Heart right ventricle (tissue), 16 donors: ENCODE measurements at regions of chrX and their contacts with region 1.

Region 1: GRCh38 chrX:77899081-77899828 is at the start of gene COX7B:
- DNase-seq: peak in 1 of 2 donors; percentile 85
- ATAC-seq: peak; percentile 76 to 86 (median 81)
- H3K4me3 ChIP-seq: peak within 1 kb of the TSS; percentile 48 to 80 (median 66)
- H3K27ac ChIP-seq: peak within 1 kb of the TSS; percentile 67 to 94 (median 90)
- H3K4me1 ChIP-seq: peaks cover 0 to 22% (median 8%) of the 10 kb centered on the region in 9 donors
- H3K27me3 ChIP-seq: no peaks in the 10 kb centered on the region
- CTCF ChIP-seq: peak in 7 of 9 donors; percentile 30 to 61 (median 44)
- total RNA-seq, gene COX7B: 915 to 1,917 (median 1,407) TPM

Region 2: GRCh38 chrX:77779695-77780094 is 119.6 kb before region 1 on chrX:
- intact Hi-C with region 1: loop called in 2 of 10 experiments (anchors 5 to 10 kb)
- DNase-seq: no peak
- ATAC-seq: no peak
- H3K4me3 ChIP-seq: no peak overlapping the region
- H3K27ac ChIP-seq: no peak overlapping the region
- H3K4me1 ChIP-seq: peaks cover 0 to 41% (median 9%) of the 10 kb centered on the region in 9 donors
- H3K27me3 ChIP-seq: no peaks in the 10 kb centered on the region
- CTCF ChIP-seq: no peak

Region 3: DNA sequence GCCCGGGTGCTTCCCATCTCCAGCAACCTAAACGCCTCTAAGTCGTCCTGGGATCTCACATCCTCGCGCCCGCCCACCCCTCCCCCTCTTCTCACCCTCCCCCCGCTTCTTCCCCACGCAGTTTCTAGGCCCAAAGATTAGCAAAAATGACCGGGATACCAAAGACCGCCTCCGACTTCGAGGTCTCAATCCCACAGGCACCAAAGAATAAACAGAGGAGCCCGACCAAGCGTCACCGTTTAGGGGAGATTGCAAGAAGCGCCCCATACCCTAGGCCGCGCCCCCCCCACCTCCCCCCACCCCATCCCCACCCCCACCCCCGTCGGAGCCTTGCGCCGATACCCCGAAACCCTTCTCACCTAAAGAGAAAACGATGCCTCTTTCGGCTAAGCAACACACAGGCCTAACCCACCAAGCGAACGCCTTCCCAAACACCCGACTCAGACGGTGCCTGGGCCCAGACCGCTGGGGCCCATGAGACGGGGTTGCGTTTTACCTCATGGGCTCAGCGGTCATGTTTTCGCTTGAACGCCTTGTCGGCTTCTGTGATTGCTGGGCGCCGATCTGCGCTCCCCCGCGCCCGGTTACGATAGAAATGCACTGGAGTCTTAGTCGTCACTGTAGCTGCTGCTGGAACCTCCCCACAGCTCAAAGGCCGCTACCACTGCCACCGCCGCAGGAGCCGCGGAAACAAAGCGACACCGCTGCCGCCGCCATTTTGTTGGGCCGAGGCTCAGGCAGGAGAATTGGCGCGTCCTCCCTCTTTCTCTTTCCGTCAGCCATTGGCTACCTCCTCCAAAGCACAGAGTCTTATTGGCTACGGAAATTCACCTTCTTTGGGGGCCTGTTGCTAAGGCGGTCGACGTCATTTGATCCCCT is 113.5 kb before region 1 on chrX and contains the start of gene ATRX:
- intact Hi-C with region 1: loop called in 3 of 10 experiments (anchors 5 to 10 kb)
- DNase-seq: peak; percentile 64 to 70
- ATAC-seq: peak; percentile 90 to 97 (median 95)
- H3K4me3 ChIP-seq: peak within 1 kb of the TSS; percentile 15 to 77 (median 68)
- H3K27ac ChIP-seq: peak within 1 kb of the TSS; percentile 52 to 94 (median 89)
- H3K4me1 ChIP-seq: peaks cover 0 to 31% (median 4%) of the 10 kb centered on the region in 9 donors
- H3K27me3 ChIP-seq: no peaks in the 10 kb centered on the region
- CTCF ChIP-seq: no peak
- total RNA-seq, gene ATRX: 71.2 to 107 (median 92.4) TPM

Region 4: DNA sequence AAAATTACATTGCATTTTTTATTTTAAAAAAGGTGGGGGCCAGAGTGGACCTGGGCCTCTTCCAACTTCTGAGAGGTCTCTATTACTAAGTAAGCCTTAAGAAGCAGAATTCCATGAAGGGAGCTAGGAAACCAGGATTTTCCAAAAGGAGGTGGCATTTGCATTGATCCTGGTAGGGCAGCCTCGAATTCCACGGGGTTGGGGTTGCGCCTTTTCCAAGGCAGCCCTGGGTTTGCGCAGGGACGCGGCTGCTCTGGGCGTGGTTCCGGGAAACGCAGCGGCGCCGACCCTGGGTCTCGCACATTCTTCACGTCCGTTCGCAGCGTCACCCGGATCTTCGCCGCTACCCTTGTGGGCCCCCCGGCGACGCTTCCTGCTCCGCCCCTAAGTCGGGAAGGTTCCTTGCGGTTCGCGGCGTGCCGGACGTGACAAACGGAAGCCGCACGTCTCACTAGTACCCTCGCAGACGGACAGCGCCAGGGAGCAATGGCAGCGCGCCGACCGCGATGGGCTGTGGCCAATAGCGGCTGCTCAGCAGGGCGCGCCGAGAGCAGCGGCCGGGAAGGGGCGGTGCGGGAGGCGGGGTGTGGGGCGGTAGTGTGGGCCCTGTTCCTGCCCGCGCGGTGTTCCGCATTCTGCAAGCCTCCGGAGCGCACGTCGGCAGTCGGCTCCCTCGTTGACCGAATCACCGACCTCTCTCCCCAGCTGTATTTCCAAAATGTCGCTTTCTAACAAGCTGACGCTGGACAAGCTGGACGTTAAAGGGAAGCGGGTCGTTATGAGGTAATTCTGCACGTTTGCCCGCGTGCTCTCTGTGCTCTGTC is 204.6 kb after region 1 on chrX and contains the start of gene PGK1:
- intact Hi-C with region 1: loop called in 3 of 10 experiments (anchors 10 kb)
- DNase-seq: peak; percentile 95 to 96
- ATAC-seq: peak; percentile 97 to 99 (median 98)
- H3K4me3 ChIP-seq: peak within 1 kb of the TSS; percentile 51 to 91 (median 82)
- H3K27ac ChIP-seq: peak within 1 kb of the TSS; percentile 75 to 97 (median 96)
- H3K4me1 ChIP-seq: peaks cover 0 to 38% (median 29%) of the 10 kb centered on the region in 9 donors
- H3K27me3 ChIP-seq: peaks cover 0 to 9% (median 0%) of the 10 kb centered on the region in 7 donors
- CTCF ChIP-seq: no peak
- total RNA-seq, gene PGK1: 414 to 824 (median 460) TPM

Region 5: DNA sequence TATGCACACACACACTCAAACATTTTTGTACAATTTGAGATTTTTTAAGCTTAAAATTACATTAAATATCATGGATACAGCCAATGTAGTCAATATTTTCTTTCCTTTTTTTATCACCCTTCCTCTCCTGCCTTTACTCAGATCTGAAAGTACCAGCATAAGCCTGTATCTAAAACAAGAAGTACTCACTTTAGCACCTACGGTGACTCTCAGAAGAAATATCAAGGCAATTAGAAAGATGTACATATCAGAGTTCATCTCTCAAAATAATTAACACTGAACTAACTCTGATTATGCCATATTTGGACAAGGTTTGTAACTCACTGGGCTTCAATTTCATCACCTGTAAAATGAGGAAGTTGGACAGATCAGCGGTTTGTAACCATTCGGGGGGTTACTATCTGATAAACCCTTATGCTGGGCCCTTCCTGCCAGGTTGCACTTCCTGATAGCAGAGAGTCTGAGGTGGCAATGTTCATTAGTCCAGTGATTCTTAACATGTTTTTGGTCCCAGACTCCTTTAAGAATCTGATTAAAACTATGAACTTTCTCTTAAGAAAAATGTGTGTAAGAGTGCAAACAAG is 1239.5 kb after region 1 on chrX:
- intact Hi-C with region 1: no loop called
- DNase-seq: no peak
- ATAC-seq: no peak
- H3K4me3 ChIP-seq: no peak overlapping the region
- H3K27ac ChIP-seq: peak overlapping the region in 1 of 10 donors; percentile 26
- H3K4me1 ChIP-seq: peaks cover 0 to 13% (median 0%) of the 10 kb centered on the region in 9 donors
- H3K27me3 ChIP-seq: peaks cover 0 to 12% (median 0%) of the 10 kb centered on the region in 7 donors
- CTCF ChIP-seq: no peak